HepG2 (cell line): ENCODE measurements at regions of chr16 and their contacts with region 1.

Region 1: DNA sequence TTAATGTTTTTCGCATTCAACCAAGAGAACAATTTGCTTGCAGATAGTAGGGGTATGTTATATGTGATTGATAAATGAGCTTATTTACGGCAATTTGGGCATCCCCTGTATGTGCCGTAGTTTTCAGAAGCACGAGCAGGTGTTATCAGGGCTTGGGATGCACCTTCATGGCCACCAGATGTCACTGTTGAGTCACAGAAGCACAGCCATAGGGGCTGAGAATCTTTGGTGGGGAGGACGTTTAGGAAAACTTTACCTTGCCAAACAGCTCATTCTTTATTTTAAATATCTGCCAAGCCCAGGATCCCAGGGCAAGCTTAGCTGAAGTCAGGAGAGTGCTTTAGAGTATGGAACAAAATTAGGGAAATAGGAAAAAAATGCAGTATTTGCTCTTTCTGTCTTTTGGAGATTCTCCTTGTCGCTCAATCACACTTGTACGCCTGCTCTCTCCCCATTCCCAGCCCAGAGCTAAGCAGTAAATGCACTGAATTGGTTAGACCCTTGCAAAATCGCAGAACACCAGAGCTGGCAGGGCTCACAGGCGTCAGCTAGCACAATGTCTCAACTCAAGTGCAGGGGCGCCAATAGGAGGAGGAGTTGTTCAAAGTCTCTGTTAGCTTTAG is 93.6 kb upstream of the MPHOSPH6 start:
- DNase-seq: peak; percentile 56
- ATAC-seq: peak; percentile 97
- H3K4me3 ChIP-seq: no peak overlapping the region
- H3K27ac ChIP-seq: no peak overlapping the region
- H3K4me1 ChIP-seq: peaks cover 9% of the 10 kb centered on the region
- H3K27me3 ChIP-seq: peaks cover 0 to 10% of the 10 kb centered on the region in 2 experiments; a peak in 1 of 5 replicates
- CTCF ChIP-seq: peak; percentile 96
- EP300 ChIP-seq: no peak
- POLR2A ChIP-seq: no peak
- RAD21 ChIP-seq: peak; percentile 91

Region 2: DNA sequence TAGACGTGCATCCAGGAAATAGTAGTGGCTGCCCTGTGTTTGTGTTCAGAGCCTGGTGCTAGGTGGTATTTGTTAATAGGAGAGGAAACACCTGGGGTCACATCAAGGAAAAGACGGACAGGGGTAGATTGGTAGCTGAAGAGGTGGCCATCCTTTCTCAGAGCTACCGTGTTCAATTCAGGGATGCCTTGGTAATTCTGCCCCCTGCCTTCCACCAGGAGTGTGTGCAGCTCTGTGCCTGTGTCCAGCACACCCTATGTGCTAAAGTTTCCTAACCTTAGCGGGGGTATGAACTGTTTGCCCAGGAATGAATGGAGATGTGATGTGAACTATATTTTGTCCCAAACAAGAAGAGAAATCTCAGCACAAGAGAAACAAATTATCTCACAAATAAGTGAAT is 80.5 kb after region 1 on chr16:
- CTCF ChIA-PET with region 1: interaction called, 42 read pairs
- POLR2A ChIA-PET with region 1: no interaction called
- in situ Hi-C with region 1: loop called (anchors 5 kb)
- intact Hi-C with region 1: loop called (anchors 1 kb)
- DNase-seq: peak; percentile 26
- ATAC-seq: peak; percentile 92
- H3K4me3 ChIP-seq: no peak overlapping the region
- H3K27ac ChIP-seq: no peak overlapping the region
- H3K4me1 ChIP-seq: no peaks in the 10 kb centered on the region
- H3K27me3 ChIP-seq: no peaks in the 10 kb centered on the region
- CTCF ChIP-seq: peak; percentile 77
- EP300 ChIP-seq: no peak
- POLR2A ChIP-seq: no peak
- RAD21 ChIP-seq: peak; percentile 49

Region 3: DNA sequence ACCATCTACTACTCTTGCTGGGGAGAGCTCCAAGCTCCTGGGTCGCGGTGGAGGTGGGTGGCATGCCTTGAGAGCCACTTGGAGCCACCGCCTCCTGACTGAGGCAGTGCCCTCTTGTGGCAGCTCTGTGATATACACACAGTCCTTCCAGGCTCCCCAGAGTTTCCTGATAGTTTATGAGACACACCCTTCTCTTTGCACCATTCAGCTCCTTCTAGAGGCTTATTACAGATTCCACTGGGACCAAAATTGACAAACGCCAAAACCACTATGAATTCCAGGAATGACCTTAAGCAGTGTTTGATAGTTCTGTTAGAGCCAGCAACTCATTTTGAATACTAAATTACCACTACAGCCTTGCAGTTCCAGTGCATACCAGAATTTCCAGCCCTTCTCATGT is 193.1 kb after region 1 on chr16:
- CTCF ChIA-PET with region 1: interaction called, 23 read pairs
- POLR2A ChIA-PET with region 1: no interaction called
- in situ Hi-C with region 1: loop called (anchors 25 kb)
- intact Hi-C with region 1: no loop called
- DNase-seq: peak; percentile 50
- ATAC-seq: peak; percentile 99
- H3K4me3 ChIP-seq: no peak overlapping the region
- H3K27ac ChIP-seq: no peak overlapping the region
- H3K4me1 ChIP-seq: no peaks in the 10 kb centered on the region
- H3K27me3 ChIP-seq: peaks cover 0 to 13% of the 10 kb centered on the region in 2 experiments; a peak in 2 of 5 replicates
- CTCF ChIP-seq: peak; percentile 84
- EP300 ChIP-seq: no peak
- POLR2A ChIP-seq: no peak
- RAD21 ChIP-seq: peak; percentile 66

Region 4: GRCh38 chr16:82580298-82580890 is 316.8 kb after region 1 on chr16:
- CTCF ChIA-PET with region 1: interaction called, 13 read pairs
- POLR2A ChIA-PET with region 1: no interaction called
- in situ Hi-C with region 1: loop called (anchors 5 kb)
- intact Hi-C with region 1: loop called (anchors 1 kb)
- DNase-seq: peak; percentile 16
- ATAC-seq: peak; percentile 75
- H3K4me3 ChIP-seq: no peak overlapping the region
- H3K27ac ChIP-seq: no peak overlapping the region
- H3K4me1 ChIP-seq: no peaks in the 10 kb centered on the region
- H3K27me3 ChIP-seq: no peaks in the 10 kb centered on the region
- CTCF ChIP-seq: peak; percentile 66
- EP300 ChIP-seq: no peak
- POLR2A ChIP-seq: no peak
- RAD21 ChIP-seq: no peak

Region 5: GRCh38 chr16:82639666-82640336 is 376.2 kb after region 1 on chr16:
- CTCF ChIA-PET with region 1: interaction called, 15 read pairs
- POLR2A ChIA-PET with region 1: no interaction called
- in situ Hi-C with region 1: loop called (anchors 10 kb)
- intact Hi-C with region 1: no loop called
- DNase-seq: peak; percentile 46
- ATAC-seq: peak; percentile 99
- H3K4me3 ChIP-seq: no peak overlapping the region
- H3K27ac ChIP-seq: no peak overlapping the region
- H3K4me1 ChIP-seq: 0 out of 2 replicates have a peak, but pooled peaks cover 6% of the 10 kb centered on the region
- H3K27me3 ChIP-seq: no peaks in the 10 kb centered on the region
- CTCF ChIP-seq: peak; percentile 91
- EP300 ChIP-seq: no peak
- POLR2A ChIP-seq: no peak
- RAD21 ChIP-seq: peak; percentile 41; the same call in 1 of the 2 replicates

Region 6: DNA sequence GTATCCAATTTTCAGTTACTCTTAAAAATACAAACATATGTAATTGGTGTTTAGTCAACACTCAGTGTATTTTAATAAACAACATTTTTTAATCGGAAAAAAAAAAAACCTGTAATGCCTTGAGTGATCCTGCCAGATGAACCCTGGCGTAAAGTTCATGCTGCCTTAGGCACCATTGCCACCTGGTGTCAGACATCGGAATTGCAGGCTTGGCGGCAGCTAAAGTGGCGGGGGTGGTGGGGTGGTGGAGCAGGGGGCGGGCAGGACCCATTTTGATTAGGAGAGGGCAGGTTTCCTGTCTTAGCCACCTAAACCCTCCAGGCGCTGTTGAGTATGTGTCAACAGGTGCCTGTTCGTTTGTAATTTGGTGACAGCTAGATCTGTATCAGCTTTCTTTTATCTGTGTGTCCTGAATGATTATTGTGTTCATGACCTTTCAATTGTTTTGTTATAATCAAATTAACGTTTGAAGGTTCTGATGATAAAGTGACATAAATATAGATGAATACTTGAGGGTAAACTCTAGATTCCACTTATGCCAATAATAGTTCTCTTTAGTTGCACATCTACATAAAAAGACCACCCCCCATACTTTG is 951.9 kb after region 1 on chr16:
- CTCF ChIA-PET with region 1: interaction called, 8 read pairs
- POLR2A ChIA-PET with region 1: no interaction called
- in situ Hi-C with region 1: loop called (anchors 25 kb)
- intact Hi-C with region 1: no loop called
- DNase-seq: peak; percentile 21
- ATAC-seq: peak; percentile 83
- H3K4me3 ChIP-seq: no peak overlapping the region
- H3K27ac ChIP-seq: no peak overlapping the region
- H3K4me1 ChIP-seq: no peaks in the 10 kb centered on the region
- H3K27me3 ChIP-seq: no peaks in the 10 kb centered on the region
- CTCF ChIP-seq: peak; percentile 85
- EP300 ChIP-seq: no peak
- POLR2A ChIP-seq: no peak
- RAD21 ChIP-seq: no peak